Activated B cell treated with CpG ODN at 0.5 μM for 24 hours (primary cell): ENCODE measurements at regions of chr10 and their contacts with region 1.

Region 1: GRCh38 chr10:29731760-29732159 is 97.0 kb upstream of the SVIL start:
- DNase-seq: no peak
- ATAC-seq: no peak
- H3K4me3 Mint-ChIP-seq: no peak overlapping the region
- H3K27ac Mint-ChIP-seq: no peak overlapping the region
- H3K4me1 Mint-ChIP-seq: peaks cover 11% of the 10 kb centered on the region
- H3K27me3 Mint-ChIP-seq: peaks cover 19% of the 10 kb centered on the region
- CTCF ChIP-seq: no peak

Region 2: GRCh38 chr10:29685506-29685905 is 46.3 kb before region 1 on chr10:
- CTCF ChIA-PET with region 1: no interaction called
- POLR2A ChIA-PET with region 1: no interaction called
- intact Hi-C with region 1: loop called (anchors 2 kb)
- DNase-seq: no peak
- ATAC-seq: no peak
- H3K4me3 Mint-ChIP-seq: no peak overlapping the region
- H3K27ac Mint-ChIP-seq: no peak overlapping the region
- H3K4me1 Mint-ChIP-seq: peaks cover 21% of the 10 kb centered on the region
- H3K27me3 Mint-ChIP-seq: no peaks in the 10 kb centered on the region
- CTCF ChIP-seq: no peak